ENCODE measurements at regions of chr5 and their contacts with region 1.

Region 1: GRCh38 chr5:132007399-132008165 is 3.9 kb downstream of the ACSL6 start:
- DNase-seq: peak; percentile 70 to 81
- ATAC-seq: peak; percentile 75 to 92
- H3K4me3 ChIP-seq: no peak overlapping the region
- H3K27ac ChIP-seq: no peak overlapping the region
- H3K4me1 ChIP-seq: no peaks in the 10 kb centered on the region
- CTCF ChIP-seq: peak; percentile 85
- EP300 ChIP-seq: no peak
- POLR2A ChIP-seq: no peak
- RAD21 ChIP-seq: peak; percentile 86 to 89

Region 2: GRCh38 chr5:131423056-131423455 is 584.5 kb before region 1 on chr5:
- CTCF ChIA-PET with region 1: interaction called, 55 read pairs
- POLR2A ChIA-PET with region 1: no interaction called
- DNase-seq: peak; percentile 13 to 27
- ATAC-seq: peak; percentile 66 to 84; a peak in 5 of 6 replicates
- H3K4me3 ChIP-seq: no peak overlapping the region
- H3K27ac ChIP-seq: no peak overlapping the region
- H3K4me1 ChIP-seq: no peaks in the 10 kb centered on the region
- CTCF ChIP-seq: peak; percentile 53; the same call in 2 of the 3 replicates
- EP300 ChIP-seq: no peak
- POLR2A ChIP-seq: no peak
- RAD21 ChIP-seq: peak; percentile 68 to 71

Region 3: DNA sequence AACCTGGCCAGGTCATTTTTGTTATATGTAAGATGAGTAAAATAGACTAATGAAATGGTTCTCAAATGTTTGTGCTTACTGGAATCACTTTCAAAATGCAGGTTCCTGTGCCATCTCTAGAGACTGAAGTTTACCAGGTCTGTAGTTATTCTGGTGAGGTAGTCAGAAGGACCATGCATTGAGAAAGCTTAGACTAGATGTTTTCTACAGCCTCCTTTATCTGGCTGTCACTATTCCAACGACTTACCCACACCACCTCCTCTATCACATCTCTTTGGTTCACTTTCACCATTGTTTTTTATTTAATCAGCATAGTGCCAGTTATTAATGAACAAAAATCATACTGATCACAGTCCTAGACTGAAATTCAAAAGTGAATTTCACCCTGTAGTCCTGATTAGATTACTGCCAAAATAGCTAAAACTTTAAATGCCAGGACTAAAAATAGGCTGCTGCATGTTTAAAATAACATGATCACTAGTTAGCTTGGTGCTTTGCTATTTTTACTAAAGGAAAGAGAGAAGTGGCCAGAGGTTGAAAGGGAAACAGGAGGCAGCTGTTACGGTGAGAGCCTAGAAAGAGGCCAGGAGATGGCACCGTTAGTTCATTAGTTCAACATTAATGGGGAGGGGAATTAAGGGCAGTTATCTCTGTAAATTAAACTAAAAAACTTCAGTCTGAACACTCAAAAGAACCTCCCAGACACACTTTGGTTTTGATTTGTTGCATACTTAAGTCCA is 196.9 kb before region 1 on chr5:
- CTCF ChIA-PET with region 1: interaction called, 10 read pairs
- POLR2A ChIA-PET with region 1: no interaction called
- DNase-seq: peak in 1 of 2 experiments; percentile 11
- ATAC-seq: peak in 1 of 2 experiments; percentile 66; a peak in 3 of 6 replicates
- H3K4me3 ChIP-seq: no peak overlapping the region
- H3K27ac ChIP-seq: no peak overlapping the region
- H3K4me1 ChIP-seq: peaks cover 5% of the 10 kb centered on the region; the same call in 1 of the 3 replicates
- CTCF ChIP-seq: peak; percentile 30; the same call in 2 of the 3 replicates
- EP300 ChIP-seq: no peak
- POLR2A ChIP-seq: no peak
- RAD21 ChIP-seq: peak; percentile 38 to 57; a peak in 3 of 5 replicates

Region 4: GRCh38 chr5:131965826-131966415 is 41.7 kb before region 1 on chr5:
- CTCF ChIA-PET with region 1: no interaction called
- POLR2A ChIA-PET with region 1: no interaction called
- DNase-seq: no peak
- ATAC-seq: no peak
- H3K4me3 ChIP-seq: no peak overlapping the region
- H3K27ac ChIP-seq: no peak overlapping the region
- H3K4me1 ChIP-seq: no peaks in the 10 kb centered on the region
- CTCF ChIP-seq: no peak
- EP300 ChIP-seq: no peak
- POLR2A ChIP-seq: no peak
- RAD21 ChIP-seq: no peak

Region 5: GRCh38 chr5:131996207-131997025 is 11.2 kb before region 1 on chr5:
- CTCF ChIA-PET with region 1: interaction called, 35 read pairs
- POLR2A ChIA-PET with region 1: no interaction called
- DNase-seq: no peak
- ATAC-seq: no peak
- H3K4me3 ChIP-seq: no peak overlapping the region
- H3K27ac ChIP-seq: no peak overlapping the region
- H3K4me1 ChIP-seq: no peaks in the 10 kb centered on the region
- CTCF ChIP-seq: no peak
- EP300 ChIP-seq: no peak
- POLR2A ChIP-seq: no peak
- RAD21 ChIP-seq: no peak